Panc1 (cell line): ENCODE measurements at regions of chr3 and their contacts with region 1.

Region 1: DNA sequence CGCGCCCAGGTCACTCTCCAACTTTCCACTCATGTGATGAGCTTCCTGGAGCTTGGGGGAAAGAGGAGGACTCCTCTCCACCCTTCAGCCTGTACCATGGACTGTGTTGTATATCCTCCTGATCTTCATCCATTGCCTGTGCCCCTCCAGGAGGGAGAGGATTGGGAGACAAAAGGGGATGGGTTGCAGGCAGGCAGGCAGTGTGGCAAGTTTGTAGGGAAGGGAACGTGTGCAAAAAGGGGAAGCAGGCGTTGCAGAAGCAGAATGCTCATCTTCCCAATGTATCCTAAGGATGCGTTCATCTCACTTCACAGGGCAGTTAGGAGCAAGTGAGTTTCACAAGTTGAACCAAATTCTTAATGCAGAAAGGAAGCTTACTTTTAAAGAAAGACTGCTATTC is 28.1 kb upstream of the GHSR start:
- DNase-seq: no peak
- ATAC-seq: no peak
- H3K4me3 ChIP-seq: no peak overlapping the region; a peak in 1 of 4 replicates
- H3K27ac ChIP-seq: no peak overlapping the region
- H3K4me1 ChIP-seq: no peaks in the 10 kb centered on the region
- H3K27me3 ChIP-seq: no peaks in the 10 kb centered on the region
- CTCF ChIP-seq: no peak

Region 2: DNA sequence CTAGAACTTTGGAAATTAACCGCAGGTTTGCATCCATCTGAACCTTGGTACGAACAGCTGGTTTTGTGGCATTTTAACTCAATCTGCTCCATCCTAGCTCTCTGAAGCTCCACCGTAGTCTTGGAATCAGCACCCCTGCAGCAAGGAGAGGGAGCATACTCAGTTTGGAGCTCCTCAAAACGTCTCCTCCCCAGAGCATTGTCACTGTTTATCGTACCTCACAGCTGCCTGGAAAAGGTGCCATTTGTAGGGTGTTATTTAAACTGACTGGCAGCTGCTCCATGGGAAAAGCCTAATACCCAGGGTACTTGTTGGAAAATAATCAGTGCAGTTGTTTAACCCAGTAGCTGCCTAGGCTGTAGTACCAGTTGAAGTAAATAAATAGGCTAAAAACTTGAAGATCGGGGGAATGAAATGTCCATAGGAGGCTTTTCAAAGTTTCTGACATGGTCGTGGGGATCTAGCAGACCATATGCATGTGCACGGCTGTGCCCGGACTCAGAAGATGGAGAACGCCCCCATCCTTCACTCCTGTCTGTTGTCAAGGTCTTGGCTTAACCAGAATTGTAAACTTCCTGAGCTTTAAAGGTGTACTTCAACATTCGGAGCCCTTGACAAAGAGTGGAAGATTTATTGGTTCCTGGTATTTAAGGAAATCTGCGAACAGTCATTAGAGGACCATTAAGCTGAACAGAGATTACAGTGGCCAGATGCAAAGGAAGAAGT is 71.9 kb before region 1 on chr3:
- CTCF ChIA-PET with region 1: no interaction called
- POLR2A ChIA-PET with region 1: no interaction called
- in situ Hi-C with region 1: no loop called
- intact Hi-C with region 1: loop called (anchors 10 kb)
- DNase-seq: no peak
- ATAC-seq: no peak
- H3K4me3 ChIP-seq: no peak overlapping the region
- H3K27ac ChIP-seq: no peak overlapping the region
- H3K4me1 ChIP-seq: no peaks in the 10 kb centered on the region
- H3K27me3 ChIP-seq: no peaks in the 10 kb centered on the region
- CTCF ChIP-seq: no peak

Region 3: GRCh38 chr3:172595641-172596393 is 119.5 kb after region 1 on chr3:
- CTCF ChIA-PET with region 1: interaction called, 4 read pairs
- POLR2A ChIA-PET with region 1: no interaction called
- in situ Hi-C with region 1: loop called (anchors 25 kb)
- intact Hi-C with region 1: no loop called
- DNase-seq: peak; percentile 51
- ATAC-seq: peak; percentile 90
- H3K4me3 ChIP-seq: peak overlapping the region; percentile 4 to 33; a peak in 3 of 4 replicates
- H3K27ac ChIP-seq: peak overlapping the region; percentile 58
- H3K4me1 ChIP-seq: peaks cover 4% of the 10 kb centered on the region; the same call in 1 of the 2 replicates
- H3K27me3 ChIP-seq: no peaks in the 10 kb centered on the region
- CTCF ChIP-seq: peak; percentile 89; the same call in 1 of the 2 replicates